Lower leg skin (tissue), 4 donors: ENCODE measurements at regions of chr14 and their contacts with region 1.

Region 1: DNA sequence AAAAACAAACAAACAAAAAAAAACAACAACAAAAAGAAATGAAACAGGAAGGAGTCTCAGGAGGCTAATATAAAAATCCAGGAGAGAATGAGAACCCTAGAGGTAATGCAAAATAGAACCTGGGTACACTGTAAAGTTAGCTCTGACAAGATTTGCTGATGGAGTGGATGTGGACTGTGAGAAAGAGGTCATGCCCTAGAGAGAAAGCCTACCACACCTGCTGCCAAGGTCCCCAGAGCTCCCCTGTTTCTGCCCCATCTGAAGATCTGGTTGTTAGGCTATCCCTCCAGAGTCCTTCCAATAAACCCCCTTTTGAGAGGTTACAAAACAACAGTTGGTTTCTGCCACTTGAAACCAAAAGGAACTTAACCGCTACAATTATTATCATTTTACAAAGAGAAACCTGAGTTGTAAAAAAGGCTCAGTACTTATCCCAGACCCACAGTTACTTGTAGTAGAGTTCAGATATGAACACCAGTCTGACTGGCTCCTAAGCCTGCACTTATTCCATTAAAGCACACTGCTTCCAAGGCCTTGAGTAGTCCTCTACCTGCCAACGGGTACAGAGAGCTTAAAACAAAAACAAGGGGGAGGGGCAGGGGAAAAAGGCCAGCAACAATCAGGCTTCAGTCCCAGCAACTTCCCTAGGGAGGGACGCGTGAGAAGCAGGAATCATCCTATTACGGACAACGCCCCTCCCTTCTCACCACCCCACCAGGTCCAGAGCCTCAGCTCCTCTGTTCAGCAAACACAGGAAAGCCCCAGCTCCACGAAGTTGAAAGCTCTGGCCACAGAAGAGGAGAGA is 27.7 kb downstream of the PPP1R13B start:
- DNase-seq: no peak
- H3K4me3 ChIP-seq: no peak overlapping the region
- CTCF ChIP-seq: no peak
- POLR2A ChIP-seq: no peak

Region 2: DNA sequence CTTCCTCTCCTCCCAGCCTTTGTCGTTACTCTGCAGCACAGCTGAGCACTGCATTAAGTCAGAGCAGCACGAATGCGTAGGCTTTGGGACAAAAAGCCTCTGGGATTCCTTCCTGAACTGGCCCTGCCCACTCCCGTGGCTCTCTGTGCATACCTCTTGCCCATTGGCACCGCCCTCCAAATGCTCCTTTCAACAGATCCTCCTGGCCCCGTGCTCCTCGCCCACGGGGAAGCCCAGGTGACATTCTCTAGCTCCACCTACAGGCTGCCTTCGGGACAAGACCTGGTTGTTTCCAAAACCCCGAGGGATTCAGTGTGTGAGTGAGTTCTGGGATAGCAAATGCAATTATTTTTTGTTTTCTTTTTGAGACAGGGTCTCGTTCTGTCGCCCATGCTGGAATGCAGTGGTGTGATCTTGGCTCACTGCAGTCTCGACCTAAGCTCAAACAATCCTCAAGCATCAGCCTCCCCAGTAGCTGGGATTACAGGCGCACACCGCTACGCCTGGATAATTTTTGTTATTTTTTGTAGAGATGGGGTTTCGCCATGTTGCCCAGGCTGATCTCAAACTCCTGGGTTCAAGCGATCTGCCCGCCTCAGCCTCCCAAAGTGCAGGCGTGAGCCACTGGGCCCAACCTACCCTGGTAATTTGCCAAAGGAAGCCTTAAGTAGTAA is 90.7 kb after region 1 on chr14:
- intact Hi-C with region 1: loop called (anchors 10 kb)
- DNase-seq: peak; percentile 64 to 93
- H3K4me3 ChIP-seq: no peak overlapping the region
- CTCF ChIP-seq: peak in 1 of 3 donors; percentile 53
- POLR2A ChIP-seq: no peak

Region 3: DNA sequence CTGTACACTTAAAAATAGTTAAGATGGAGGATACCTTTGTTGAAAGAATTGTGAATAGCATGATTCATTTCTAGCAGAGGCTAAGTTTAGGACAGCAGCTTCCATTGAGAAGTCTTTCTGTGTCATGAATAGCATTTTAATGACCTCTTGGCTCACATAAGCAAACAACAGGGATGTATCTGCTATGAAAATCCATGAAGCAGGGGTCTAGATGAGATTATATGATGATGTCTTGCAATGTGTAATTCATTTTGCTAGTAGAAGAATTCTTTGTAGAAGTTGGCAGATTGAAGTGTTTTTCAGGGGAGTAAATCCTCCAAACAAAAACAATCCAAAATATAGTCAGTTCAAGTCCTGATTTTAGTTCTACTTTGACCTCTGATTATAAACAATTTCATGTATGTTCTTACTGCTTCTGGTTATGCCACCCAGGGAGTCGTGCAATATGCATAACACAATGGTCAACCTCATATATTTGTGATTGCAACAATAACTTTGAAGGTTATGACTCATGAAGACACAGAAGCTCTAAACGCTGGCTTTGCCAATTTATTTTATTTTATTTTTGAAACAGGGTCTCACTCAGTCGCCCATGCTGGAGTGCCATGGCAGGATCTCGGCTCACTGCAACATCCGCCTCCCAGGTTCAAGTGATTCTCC is 129.6 kb after region 1 on chr14:
- intact Hi-C with region 1: no loop called
- DNase-seq: no peak
- H3K4me3 ChIP-seq: no peak overlapping the region
- CTCF ChIP-seq: no peak
- POLR2A ChIP-seq: no peak

Region 4: GRCh38 chr14:104219731-104220214 is 400.1 kb after region 1 on chr14:
- intact Hi-C with region 1: loop called (anchors 5 kb)
- DNase-seq: no peak
- H3K4me3 ChIP-seq: no peak overlapping the region
- CTCF ChIP-seq: no peak
- POLR2A ChIP-seq: no peak